Posterior vena cava (tissue), 2 donors: ENCODE measurements at regions of chr18 and their contacts with region 1.

Region 1: GRCh38 chr18:59249205-59249774 is 24.0 kb downstream of the RAX start:
- DNase-seq: no peak

Region 2: DNA sequence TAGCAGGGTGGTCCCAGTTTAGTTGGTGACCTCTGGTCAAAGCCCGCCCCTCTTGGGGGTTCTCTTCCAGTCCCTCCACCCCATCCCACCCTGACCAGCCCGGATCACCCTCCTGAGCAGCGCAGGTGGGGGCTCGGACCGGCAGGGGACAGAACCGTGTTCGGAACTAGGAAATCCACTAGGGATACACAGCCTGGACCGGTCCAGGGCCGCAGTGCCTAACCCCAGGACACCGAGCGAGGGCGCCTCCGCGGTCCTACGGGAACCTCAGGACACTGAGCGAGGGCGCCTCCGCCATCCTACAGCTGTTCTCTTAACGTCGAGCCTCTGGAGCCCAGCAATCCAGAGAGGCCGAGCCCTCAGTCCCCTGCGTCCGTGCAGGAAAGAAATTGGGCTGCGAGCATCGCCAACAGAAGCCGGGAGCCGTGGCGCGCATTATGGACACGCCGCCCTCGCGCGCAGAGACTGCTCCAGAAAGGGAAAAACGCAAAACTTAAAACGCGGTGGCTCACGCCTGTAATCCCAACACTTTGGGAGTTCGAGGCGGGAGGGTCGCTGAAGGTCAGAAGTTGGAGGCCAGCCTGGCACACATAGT is 15.5 kb after region 1 on chr18:
- intact Hi-C with region 1: loop called in 1 of 2 experiments (anchors 1 kb)
- DNase-seq: no peak